ENCODE measurements at regions of chr14 and their contacts with region 1.

Region 1: GRCh38 chr14:51860164-51860824 is at the start of gene GNG2:
- DNase-seq: peak; percentile 93
- ATAC-seq: peak; percentile 97
- H3K4me3 Mint-ChIP-seq: peak within 1 kb of the TSS; percentile 96
- H3K27ac Mint-ChIP-seq: peak within 1 kb of the TSS; percentile 95
- H3K4me1 Mint-ChIP-seq: peaks cover 48% of the 10 kb centered on the region
- H3K27me3 Mint-ChIP-seq: no peaks in the 10 kb centered on the region
- total RNA-seq, gene GNG2: 293 to 302 TPM

Region 2: GRCh38 chr14:51789596-51789995 is 70.7 kb before region 1 on chr14:
- CTCF ChIA-PET with region 1: no interaction called
- POLR2A ChIA-PET with region 1: no interaction called
- DNase-seq: no peak
- ATAC-seq: no peak
- H3K4me3 Mint-ChIP-seq: no peak overlapping the region
- H3K27ac Mint-ChIP-seq: no peak overlapping the region
- H3K4me1 Mint-ChIP-seq: no peaks in the 10 kb centered on the region
- H3K27me3 Mint-ChIP-seq: peaks cover 32% of the 10 kb centered on the region

Region 3: DNA sequence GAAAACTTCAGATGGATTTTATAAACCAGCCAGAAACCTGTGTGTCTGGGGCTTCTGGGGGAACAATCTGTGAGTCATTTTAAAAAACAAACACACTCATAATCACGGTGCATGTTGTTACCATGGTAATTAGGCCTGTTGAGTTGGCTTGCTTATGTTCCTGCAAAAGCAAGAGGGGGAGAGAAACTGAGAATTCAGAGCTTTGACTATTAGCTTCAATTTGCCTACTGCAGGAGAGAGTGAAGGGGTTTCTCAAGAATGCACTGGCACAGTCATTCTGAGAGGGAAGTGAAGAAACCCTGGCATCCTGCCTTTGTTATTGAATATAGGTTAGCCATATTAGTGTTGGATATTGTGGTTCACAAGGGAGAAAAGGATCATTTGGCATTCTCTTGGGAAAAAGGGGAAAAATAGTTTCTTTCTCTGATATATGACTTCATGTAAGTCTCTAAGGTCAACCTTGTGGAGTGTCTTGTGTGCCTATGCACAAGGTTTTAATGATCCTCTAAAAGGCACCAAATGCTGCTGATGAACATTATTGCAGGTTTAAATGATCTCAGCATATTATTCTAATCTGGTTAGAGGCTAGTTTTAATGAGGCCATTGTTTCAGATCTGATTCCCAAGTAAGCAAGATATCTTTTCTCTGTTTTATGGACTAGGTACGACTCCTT is 13.1 kb after region 1 on chr14:
- CTCF ChIA-PET with region 1: interaction called, 4 read pairs
- POLR2A ChIA-PET with region 1: interaction called, 24 read pairs
- DNase-seq: peak; percentile 32
- ATAC-seq: peak; percentile 51
- H3K4me3 Mint-ChIP-seq: peak overlapping the region; percentile 1
- H3K27ac Mint-ChIP-seq: peak overlapping the region; percentile 36
- H3K4me1 Mint-ChIP-seq: peaks cover 56% of the 10 kb centered on the region
- H3K27me3 Mint-ChIP-seq: no peaks in the 10 kb centered on the region